ENCODE measurements at regions of chr1 and their contacts with region 1.

Region 1: DNA sequence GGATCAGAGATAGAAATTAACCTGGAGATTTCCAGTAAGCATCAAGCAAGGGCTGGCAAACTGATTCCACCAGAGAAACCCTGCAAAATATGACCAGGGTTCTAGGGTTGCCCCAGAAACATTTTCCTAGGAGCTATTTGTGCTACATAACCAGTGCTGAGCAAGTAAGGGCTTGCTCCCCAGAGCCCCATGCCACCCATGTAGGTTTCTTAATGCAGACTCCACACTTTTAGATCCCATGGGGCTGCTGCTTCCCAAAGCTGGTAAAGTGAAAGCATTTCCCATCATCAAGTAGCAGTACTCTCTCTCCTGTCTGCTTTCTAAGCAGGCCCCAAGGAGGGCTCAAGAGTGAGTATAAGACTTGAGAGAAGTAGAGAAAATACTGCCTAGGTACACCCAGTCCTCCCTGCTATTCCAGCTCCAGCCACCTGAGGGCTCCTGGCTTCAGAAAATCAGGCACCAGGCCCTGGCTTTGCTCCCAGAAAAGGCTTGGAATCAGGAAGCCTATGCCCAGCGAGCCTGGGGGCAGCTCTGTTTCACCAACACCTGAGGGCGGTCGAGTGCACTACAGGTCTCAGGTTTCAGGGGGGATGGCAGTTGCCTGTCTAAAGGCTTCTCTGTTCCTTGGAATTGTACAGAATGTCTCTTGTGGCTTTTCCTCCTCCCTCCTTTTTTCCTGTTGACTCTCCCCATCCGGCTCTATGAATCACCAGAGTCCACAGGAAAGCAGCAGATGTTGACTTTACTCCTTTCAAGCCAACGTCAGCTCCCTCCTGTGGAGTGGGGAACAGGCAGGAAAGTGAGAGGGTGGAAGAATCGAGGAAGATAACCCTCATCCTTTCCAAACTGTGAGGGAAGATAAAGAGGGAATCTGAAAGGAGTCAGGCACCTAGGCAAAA is 6.2 kb upstream of the ANKRD35 start:
- H3K4me3 Mint-ChIP-seq: no peak overlapping the region
- H3K27ac Mint-ChIP-seq: no peak overlapping the region
- H3K4me1 Mint-ChIP-seq: no peaks in the 10 kb centered on the region
- H3K27me3 Mint-ChIP-seq: peaks cover 2% of the 10 kb centered on the region

Region 2: DNA sequence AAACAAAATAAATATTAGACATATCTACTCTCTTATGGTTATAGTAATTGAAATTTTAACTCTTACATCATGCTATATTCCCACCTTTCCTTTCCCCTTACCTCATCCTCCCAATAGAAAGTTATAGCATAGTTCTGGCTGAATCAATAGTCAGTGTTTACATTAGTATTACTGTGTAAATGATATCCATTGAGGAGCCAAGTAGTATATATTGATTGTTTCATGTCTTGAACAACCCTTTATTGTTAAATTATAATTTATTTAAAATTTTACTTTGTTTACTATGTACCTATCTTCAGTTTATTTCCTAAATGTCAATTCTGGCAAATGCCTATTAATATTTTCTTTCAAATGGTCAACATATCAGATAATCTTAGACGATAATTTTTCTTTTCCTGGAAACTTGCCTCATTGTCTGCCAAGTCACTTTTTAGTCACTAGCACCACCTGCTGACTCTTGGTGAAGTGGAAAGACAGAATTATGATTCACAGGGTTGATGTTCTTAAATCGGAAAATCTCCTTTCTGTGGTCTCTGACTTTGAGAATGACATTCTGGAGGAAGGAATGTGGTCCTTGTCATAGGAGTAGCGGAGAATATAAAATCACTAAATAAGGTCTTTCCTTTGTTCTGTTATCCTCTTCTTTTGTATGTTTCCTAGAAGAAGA is 121.0 kb after region 1 on chr1:
- intact Hi-C with region 1: loop called (anchors 1 kb)
- H3K4me3 Mint-ChIP-seq: no peak overlapping the region
- H3K27ac Mint-ChIP-seq: no peak overlapping the region
- H3K4me1 Mint-ChIP-seq: peaks cover 10% of the 10 kb centered on the region
- H3K27me3 Mint-ChIP-seq: peaks cover 18% of the 10 kb centered on the region